Mammary epithelial cell (primary cell): ENCODE measurements at regions of chr7 and their contacts with region 1.

Region 1: GRCh38 chr7:112550468-112551060 is 69.8 kb downstream of the LSMEM1 start:
- DNase-seq: peak; percentile 60
- H3K4me3 ChIP-seq: no peak overlapping the region
- H3K27ac ChIP-seq: no peak overlapping the region
- H3K4me1 ChIP-seq: no peaks in the 10 kb centered on the region
- H3K27me3 ChIP-seq: no peaks in the 10 kb centered on the region
- CTCF ChIP-seq: peak; percentile 98

Region 2: DNA sequence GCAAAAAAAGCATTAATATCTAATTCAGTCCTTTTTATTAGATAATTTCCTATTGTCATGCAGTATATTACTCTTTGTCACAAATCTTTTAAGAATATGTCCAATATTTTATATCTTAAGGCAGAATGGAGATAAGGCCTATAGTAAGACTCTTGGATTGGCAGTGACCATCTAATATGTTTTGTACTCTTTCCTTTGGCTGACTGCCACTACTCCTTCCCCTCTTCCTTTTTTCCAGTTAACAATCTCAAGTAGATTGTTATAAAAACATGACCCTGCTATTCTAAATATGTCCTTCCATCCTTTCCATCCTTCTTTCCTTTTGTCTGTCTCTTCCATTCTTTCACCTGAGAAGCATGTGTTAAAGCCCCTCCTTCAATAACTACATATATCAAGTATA is 332.4 kb after region 1 on chr7:
- CTCF ChIA-PET with region 1: no interaction called
- dilution Hi-C with region 1: no loop called
- in situ Hi-C with region 1: loop called in 1 of 2 experiments (anchors 10 kb)
- intact Hi-C with region 1: no loop called
- DNase-seq: no peak
- H3K4me3 ChIP-seq: no peak overlapping the region
- H3K27ac ChIP-seq: no peak overlapping the region
- H3K4me1 ChIP-seq: no peaks in the 10 kb centered on the region
- H3K27me3 ChIP-seq: no peaks in the 10 kb centered on the region
- CTCF ChIP-seq: no peak

Region 3: GRCh38 chr7:113015032-113015645 is 464.6 kb after region 1 on chr7:
- CTCF ChIA-PET with region 1: no interaction called
- dilution Hi-C with region 1: no loop called
- in situ Hi-C with region 1: no loop called
- intact Hi-C with region 1: loop called (anchors 2 kb)
- DNase-seq: peak; percentile 27
- H3K4me3 ChIP-seq: no peak overlapping the region
- H3K27ac ChIP-seq: no peak overlapping the region
- H3K4me1 ChIP-seq: peaks cover 12% of the 10 kb centered on the region
- H3K27me3 ChIP-seq: no peaks in the 10 kb centered on the region
- CTCF ChIP-seq: peak; percentile 42 to 58

Region 4: GRCh38 chr7:113289140-113289740 is 738.7 kb after region 1 on chr7:
- CTCF ChIA-PET with region 1: no interaction called
- dilution Hi-C with region 1: no loop called
- in situ Hi-C with region 1: no loop called
- intact Hi-C with region 1: loop called (anchors 1 kb)
- DNase-seq: peak; percentile 64
- H3K4me3 ChIP-seq: no peak overlapping the region
- H3K27ac ChIP-seq: no peak overlapping the region
- H3K4me1 ChIP-seq: no peaks in the 10 kb centered on the region
- H3K27me3 ChIP-seq: no peaks in the 10 kb centered on the region
- CTCF ChIP-seq: peak; percentile 51 to 84

Region 5: DNA sequence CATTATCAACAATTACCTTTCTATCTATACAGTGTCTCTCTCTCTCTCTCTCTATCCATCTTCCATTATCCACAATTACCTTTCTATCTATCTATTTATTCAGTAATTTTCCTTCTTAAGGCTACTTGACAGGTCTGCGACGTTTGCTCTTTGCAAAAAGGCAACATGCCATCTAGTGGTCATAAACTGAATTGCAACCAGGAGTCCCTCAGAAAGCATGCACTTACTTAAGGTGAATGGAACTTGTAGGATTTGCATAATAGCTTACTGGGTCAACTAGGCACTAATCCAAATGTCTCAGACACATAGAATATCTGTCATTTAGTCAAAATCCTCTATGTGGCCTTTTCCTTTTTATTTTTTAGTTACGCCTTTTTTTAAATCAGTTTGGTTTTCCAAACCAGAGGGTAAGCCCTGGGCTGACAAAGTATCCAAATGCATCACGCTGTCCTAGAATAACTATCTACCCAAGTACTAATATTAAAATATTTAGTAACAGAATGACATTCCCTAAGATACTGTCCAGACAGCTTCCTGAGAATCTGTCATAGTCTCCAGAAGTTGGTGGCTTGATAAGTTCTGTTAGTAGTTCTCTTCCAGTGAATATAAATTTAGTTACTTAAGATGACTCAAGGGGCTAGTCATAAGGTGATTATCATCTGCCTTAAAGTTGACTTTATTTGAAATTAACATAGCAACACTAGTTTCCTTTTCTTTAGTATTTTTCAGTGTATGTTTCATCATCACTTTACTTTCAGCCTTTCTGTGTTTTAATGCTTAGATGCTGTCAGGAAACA is 1159.9 kb after region 1 on chr7:
- CTCF ChIA-PET with region 1: no interaction called
- dilution Hi-C with region 1: no loop called
- in situ Hi-C with region 1: no loop called
- intact Hi-C with region 1: loop called (anchors 10 kb)
- DNase-seq: peak; percentile 72
- H3K4me3 ChIP-seq: no peak overlapping the region
- H3K27ac ChIP-seq: no peak overlapping the region
- H3K4me1 ChIP-seq: no peaks in the 10 kb centered on the region
- H3K27me3 ChIP-seq: no peaks in the 10 kb centered on the region
- CTCF ChIP-seq: peak; percentile 93 to 98